ENCODE measurements at regions of chr1 and their contacts with region 1.

Region 1: DNA sequence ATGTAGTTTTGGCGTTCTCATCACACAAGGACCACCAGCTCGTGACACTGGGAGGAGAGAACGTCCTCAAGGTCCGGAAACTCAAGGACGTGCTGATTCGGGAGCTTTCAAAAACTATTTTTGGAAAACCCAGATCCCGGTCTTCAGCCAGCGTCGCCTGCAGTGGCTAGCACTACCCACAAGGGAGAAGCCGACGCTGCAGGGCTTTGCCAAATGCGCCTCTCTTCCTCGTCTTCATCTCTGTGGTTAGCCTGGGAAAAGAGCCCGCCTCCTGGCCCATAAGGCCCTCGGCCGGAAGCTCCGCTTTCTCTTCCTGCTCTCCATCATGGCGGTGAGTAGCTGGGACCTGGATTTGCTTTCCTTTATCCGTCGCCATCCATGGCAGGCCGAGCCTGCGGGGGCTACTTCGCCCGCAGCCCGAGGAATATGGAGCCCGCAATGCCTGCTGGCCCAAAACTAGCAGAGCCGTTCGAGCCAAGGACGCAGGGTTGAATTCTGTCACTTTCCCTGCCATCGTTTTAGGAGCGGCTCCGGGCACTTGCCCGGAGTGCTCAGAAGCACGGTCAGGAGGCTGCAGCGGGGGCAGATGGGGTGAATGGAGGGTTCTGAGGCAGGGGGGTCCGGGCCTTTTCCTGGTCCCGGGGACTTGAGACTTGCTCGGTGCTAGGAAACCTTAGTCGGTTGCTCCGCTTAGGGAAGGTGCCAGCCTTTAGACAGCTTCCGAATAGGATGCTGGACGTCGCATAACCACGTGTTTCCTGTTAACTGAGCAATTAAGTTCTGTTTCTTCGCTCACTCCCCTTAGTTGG is at the start of gene RPL11:
- DNase-seq: peak; percentile 95
- ATAC-seq: peak; percentile 100
- total RNA-seq, gene RPL11: 681 TPM

Region 2: DNA sequence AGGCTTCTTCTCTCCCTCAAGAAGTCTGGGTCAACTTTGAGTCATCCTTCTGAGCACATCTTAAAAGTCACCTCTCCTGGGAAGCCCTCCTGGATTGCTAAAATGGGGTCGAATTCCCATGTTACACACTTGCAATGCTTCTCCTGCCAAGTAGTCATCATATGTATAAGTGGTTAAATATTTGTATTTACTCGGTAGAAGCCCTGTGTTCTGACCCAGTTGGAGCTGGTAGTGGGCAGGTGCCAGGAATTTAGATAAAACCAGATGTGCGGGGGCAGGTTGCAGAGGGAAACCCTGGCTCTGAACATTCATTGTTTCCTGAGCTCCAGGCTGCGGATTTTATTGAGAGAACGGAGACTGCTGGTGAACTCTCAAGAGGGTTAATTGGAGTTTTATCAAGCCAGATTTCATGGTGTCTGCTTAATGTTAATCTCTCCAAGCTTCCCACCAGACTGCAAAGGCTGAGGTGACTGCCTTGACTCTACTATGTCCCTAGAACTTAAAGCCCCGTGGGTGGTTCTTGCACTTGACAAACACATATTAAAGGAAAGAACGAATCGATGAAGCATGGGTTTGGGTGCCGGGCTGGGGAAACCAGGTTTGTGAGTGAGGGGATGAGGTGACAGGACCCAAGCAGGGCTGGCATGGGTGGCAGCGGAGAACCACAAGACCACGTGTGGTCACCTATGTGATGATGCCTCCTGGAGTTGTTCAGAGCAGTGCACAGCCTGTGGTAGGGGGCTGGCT is 52.7 kb before region 1 on chr1:
- intact Hi-C with region 1: no loop called
- DNase-seq: peak; percentile 43
- ATAC-seq: peak; percentile 55

Region 3: GRCh38 chr1:23743287-23744052 is 51.8 kb after region 1 on chr1 and contains the start of gene ELOA:
- intact Hi-C with region 1: loop called (anchors 5 kb)
- DNase-seq: peak; percentile 92
- ATAC-seq: peak; percentile 95
- total RNA-seq, gene ELOA: 37.7 TPM